Prostate gland (tissue), 2 donors: ENCODE measurements at regions of chr1 and their contacts with region 1.

Region 1: DNA sequence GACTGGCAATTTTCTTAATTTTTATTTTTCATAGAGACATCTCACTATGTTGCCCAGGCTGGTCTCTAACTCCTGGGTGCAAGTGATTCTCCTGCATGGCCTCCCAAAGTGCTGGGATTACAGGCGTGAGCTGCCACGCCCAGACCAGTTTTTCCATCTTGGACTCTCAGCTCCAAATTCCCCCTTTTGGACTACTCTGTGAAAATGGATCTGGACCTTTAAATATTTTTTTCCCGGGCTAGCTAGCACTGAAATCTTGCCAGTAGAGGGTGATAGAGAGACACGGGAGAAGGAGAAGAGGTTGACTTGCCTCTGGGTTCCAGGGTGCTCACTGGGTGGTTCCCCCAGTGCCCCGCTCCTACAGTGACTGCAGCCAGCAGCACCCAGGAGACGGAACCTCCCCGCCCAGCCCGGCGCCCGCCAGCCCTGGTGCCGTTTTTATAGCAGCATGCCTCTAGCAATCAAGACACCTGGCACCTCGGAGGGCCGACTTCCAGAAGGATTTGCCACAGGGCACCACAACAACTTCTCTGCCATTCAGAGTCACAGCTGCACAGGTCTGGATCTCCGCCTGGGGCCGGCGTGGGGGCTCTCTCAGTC is 34.7 kb upstream of the SCCPDH start:
- DNase-seq: peak; percentile 73
- H3K4me3 ChIP-seq: peak overlapping the region in 1 of 2 donors; percentile 9
- H3K27ac ChIP-seq: peak overlapping the region in 1 of 2 donors; percentile 40
- H3K4me1 ChIP-seq: no peaks in the 10 kb centered on the region
- H3K27me3 ChIP-seq: no peaks in the 10 kb centered on the region
- CTCF ChIP-seq: peak; percentile 56 to 87 (median 74)
- POLR2A ChIP-seq: no peak

Region 2: DNA sequence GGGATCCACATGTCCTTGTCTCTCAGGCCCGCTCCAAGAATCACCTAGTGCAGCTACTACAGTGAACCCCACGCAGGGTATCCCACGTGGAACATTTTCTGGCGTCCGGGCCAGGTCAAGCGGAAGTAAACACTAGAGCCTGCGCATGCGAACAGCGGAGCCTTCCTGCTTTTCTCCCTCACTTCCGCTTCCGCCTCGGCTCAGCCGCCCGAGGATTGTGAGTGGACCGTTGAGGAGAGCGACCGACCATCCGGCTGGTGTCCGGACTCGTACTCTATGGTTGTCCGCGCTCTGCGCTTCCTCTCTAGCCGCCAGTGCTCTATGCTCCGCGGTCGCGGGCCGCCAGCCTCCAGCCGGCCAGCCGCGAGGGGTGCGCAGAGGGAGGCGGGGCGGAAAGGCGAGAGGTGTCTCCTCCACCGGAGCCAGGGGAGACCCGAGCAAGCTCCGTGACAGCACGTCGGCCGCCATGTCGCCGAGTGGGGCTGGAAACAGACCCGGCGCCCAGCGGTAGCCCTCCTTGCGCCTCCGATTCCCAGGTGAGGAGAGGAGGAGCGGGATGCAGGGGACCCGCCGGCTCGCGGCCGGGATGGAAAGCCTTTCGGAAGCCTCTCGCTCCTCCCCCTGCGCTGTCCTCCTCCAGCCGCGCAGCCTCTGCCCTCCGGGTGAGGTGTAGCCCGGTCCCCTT is 123.2 kb before region 1 on chr1 and contains the starts of genes CNST and TFB2M:
- intact Hi-C with region 1: loop called (anchors 5 kb)
- DNase-seq: peak; percentile 98
- H3K4me3 ChIP-seq: peak within 1 kb of the TSS; percentile 77 to 94
- H3K27ac ChIP-seq: peak within 1 kb of the TSS; percentile 92 to 94
- H3K4me1 ChIP-seq: no peaks in the 10 kb centered on the region
- H3K27me3 ChIP-seq: no peaks in the 10 kb centered on the region
- CTCF ChIP-seq: peak in 2 of 4 experiments; percentile 10 to 31
- POLR2A ChIP-seq: peak; percentile 86
- total RNA-seq, gene CNST: 19.4 to 52.6 TPM
- total RNA-seq, gene TFB2M: 10.3 to 15.1 TPM

Region 3: GRCh38 chr1:246753670-246754535 is 64.4 kb after region 1 on chr1:
- intact Hi-C with region 1: loop called (anchors 5 kb)
- DNase-seq: peak; percentile 44
- H3K4me3 ChIP-seq: no peak overlapping the region
- H3K27ac ChIP-seq: peak overlapping the region in 1 of 2 donors; percentile 1
- H3K4me1 ChIP-seq: peaks cover 4% of the 10 kb centered on the region
- H3K27me3 ChIP-seq: no peaks in the 10 kb centered on the region
- CTCF ChIP-seq: peak; percentile 50 to 85 (median 74)
- POLR2A ChIP-seq: no peak

Region 4: GRCh38 chr1:246837418-246838117 is 148.1 kb after region 1 on chr1:
- intact Hi-C with region 1: no loop called
- DNase-seq: no peak
- H3K4me3 ChIP-seq: no peak overlapping the region
- H3K27ac ChIP-seq: no peak overlapping the region
- H3K4me1 ChIP-seq: no peaks in the 10 kb centered on the region
- H3K27me3 ChIP-seq: no peaks in the 10 kb centered on the region
- CTCF ChIP-seq: no peak
- POLR2A ChIP-seq: no peak